ENCODE measurements at regions of chr19 and their contacts with region 1.

Region 1: DNA sequence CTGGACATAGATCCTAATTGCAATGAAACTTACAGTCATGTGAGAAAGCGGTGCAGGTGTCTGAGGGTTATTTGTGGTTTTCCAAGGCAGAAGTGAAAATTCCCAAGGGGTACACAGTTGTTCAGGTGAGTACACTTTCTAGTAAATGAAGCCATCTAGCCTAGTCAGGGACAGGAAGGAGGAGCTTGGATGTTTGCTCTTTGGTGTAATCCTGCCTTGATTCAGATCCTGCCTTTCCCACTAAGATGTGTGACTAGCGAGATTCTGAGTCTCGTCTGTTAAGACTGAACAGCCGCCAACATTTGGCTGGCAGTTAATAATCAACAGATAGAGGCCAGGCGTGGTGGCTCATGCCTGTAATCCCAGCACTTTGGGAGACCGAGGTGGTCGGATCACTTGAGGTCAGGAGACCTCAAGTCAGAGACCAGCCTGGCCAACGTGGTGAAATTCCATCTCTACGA is 2.5 kb downstream of the RPS9 start:
- DNase-seq: no peak
- H3K4me3 ChIP-seq: peak overlapping the region in 1 of 3 experiments; percentile 97
- H3K27ac ChIP-seq: no peak overlapping the region
- H3K4me1 ChIP-seq: peaks cover 42% of the 10 kb centered on the region
- H3K27me3 ChIP-seq: no peaks in the 10 kb centered on the region
- CTCF ChIP-seq: no peak
- POLR2A ChIP-seq: no peak

Region 2: DNA sequence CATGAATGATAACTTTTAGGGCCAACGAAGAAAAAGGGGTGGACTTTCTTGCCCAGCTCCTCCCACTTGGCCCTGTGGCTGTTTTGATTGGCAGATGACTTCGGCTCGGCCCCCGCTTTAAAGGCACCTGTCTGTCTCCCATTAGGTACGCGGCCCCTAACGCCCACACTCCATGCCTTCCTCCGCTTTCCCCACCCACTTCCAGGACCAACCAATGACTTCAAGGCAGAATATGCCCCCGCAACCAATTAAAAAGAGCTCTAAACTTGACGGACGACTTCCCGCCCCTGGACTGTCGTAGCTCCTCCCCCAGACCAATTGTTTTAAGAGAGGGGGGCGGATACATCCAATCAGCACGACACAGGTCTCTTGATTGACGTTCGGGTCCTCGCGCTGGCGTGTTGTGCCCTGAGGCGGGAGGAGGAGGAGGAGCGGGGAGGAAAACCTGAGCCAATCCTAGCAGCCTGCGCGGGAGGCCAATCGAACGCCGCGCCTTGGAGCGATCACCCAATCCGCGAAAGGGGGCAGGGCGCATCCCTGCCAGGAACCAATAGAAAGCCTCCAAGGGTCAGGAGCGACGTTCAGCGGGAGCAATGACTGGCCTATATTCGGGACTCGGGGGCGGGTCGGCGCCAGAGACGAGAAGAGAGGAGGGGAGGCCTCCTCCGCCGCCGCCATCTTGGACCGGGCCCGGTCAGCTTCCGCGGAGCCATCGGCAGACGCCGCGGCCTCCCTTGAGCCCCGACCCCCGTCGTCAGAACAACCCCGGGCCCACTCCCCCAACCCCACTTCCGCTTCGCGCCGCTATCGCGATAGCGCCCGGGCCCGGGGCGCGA is 65.9 kb before region 1 on chr19 and contains the start of gene CNOT3:
- CTCF ChIA-PET with region 1: no interaction called
- POLR2A ChIA-PET with region 1: interaction called, 12 read pairs
- dilution Hi-C with region 1: no loop called
- intact Hi-C with region 1: loop called (anchors 1 kb)
- DNase-seq: peak; percentile 100
- H3K4me3 ChIP-seq: peak within 1 kb of the TSS; percentile 66 to 98 (median 69)
- H3K27ac ChIP-seq: peak within 1 kb of the TSS; percentile 71
- H3K4me1 ChIP-seq: peaks cover 17% of the 10 kb centered on the region
- H3K27me3 ChIP-seq: no peaks in the 10 kb centered on the region
- CTCF ChIP-seq: no peak
- POLR2A ChIP-seq: peak; percentile 72
- total RNA-seq, gene CNOT3: 62.4 and 74.7 TPM in 2 replicates

Region 3: DNA sequence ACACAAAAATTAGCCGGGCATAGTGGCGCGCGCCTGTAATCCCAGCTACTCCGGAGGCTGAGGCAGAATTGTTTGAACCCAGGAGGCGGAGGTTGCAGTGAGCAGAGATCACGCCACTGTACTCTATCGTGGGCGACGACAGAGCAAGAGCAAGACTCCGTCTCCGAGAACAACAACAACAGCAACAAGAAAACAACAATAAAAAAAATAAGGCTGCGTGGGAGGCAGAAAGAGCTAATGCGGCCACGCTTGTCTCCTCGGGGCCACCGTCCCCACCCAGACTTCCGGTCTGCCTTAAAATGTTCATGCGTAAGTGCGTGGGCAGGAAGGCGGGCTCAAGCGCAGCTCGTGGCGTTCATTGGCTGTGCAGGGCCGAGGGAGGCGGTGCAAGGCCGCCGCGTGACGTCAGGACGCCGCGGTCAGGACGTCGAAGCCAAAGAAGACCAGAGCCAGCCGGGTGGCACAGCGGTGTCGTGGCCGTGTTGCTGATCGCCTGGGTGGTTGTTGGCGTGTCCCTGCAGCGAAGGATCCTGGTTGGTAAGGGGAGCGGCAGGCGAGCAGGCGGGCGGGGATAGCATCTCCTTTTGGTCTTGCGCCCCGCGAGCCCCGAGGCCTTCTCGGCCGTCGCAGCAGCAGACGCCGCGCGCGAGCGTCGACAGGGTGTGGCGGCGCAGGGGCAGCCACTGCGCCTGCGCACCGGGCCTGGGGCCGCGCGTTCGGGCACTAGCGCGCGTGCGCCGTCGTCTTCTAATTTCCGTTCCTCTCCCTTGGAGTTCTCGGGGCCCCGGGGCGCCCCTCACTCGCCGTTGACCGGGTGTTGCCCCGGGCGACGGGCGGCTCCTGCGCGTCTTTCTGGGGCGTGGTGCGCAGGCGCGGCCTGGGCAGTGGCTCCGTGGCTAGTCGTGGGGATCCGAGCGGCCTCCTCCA is 245.9 kb after region 1 on chr19 and contains the start of gene LENG8:
- CTCF ChIA-PET with region 1: no interaction called
- POLR2A ChIA-PET with region 1: no interaction called
- dilution Hi-C with region 1: no loop called
- intact Hi-C with region 1: loop called (anchors 5 kb)
- DNase-seq: peak; percentile 99
- H3K4me3 ChIP-seq: peak within 1 kb of the TSS; percentile 76 to 96 (median 92)
- H3K27ac ChIP-seq: peak within 1 kb of the TSS; percentile 87
- H3K4me1 ChIP-seq: peaks cover 22% of the 10 kb centered on the region
- H3K27me3 ChIP-seq: no peaks in the 10 kb centered on the region
- CTCF ChIP-seq: no peak
- POLR2A ChIP-seq: peak; percentile 97
- total RNA-seq, gene LENG8: 213 and 218 TPM in 2 replicates

Measured in endothelial cell of umbilical vein (primary cell).